HCT116 (cell line): ENCODE measurements at regions of chr11 and their contacts with region 1.

Region 1: GRCh38 chr11:111601979-111602864 is at the start of gene SIK2:
- DNase-seq: peak; percentile 87
- ATAC-seq: peak; percentile 88
- H3K4me3 ChIP-seq: peak within 1 kb of the TSS; percentile 73 to 76
- H3K27ac ChIP-seq: peak within 1 kb of the TSS; percentile 72; the same call in 1 of the 2 replicates
- H3K4me1 ChIP-seq: peaks cover 9 to 27% of the 10 kb centered on the region in 2 experiments; a peak in 3 of 4 replicates
- H3K27me3 ChIP-seq: no peaks in the 10 kb centered on the region
- CTCF ChIP-seq: peak; percentile 72 to 94 (median 83)
- POLR2A ChIP-seq: no peak
- RAD21 ChIP-seq: peak; percentile 100
- total RNA-seq, gene SIK2: 13.0 TPM

Region 2: GRCh38 chr11:111617286-111617685 is 15.1 kb after region 1 on chr11:
- CTCF ChIA-PET with region 1: interaction called, 10 read pairs
- POLR2A ChIA-PET with region 1: no interaction called
- RAD21 ChIA-PET with region 1: no interaction called
- intact Hi-C with region 1: no loop called
- DNase-seq: no peak
- ATAC-seq: no peak
- H3K4me3 ChIP-seq: no peak overlapping the region
- H3K27ac ChIP-seq: no peak overlapping the region
- H3K4me1 ChIP-seq: no peaks in the 10 kb centered on the region
- H3K27me3 ChIP-seq: no peaks in the 10 kb centered on the region
- CTCF ChIP-seq: no peak
- POLR2A ChIP-seq: no peak
- RAD21 ChIP-seq: no peak